GM12878 (cell line): ENCODE measurements at regions of chr13 and their contacts with region 1.

Region 1: DNA sequence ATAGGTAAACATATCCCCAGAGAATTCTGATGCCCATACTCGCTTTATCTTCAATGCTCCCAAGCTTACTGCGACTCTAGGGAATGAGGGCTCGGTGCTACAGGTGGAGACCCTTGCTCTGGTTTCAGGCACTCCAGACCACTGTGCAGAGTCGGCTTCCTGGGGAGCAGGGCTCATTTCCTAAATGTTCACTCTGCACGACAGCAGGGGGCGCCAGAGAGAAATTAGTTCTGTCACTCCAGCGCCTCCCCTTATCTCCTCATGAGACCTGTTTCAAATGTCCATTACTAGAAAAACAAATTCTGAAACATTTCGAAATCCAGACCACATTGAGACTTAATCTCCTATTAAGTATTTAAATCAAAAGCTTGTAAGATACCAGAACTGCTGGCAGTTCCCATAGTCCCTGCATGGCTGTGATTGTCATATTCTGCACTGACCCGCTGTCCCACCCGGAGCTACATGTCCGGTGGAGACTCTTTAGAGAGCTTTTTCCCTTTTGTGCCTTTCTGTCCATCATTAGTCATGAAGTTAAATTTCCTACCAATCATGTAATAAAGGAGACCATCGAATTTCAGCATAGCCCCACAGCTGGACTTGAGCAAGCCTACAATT is 22.4 kb downstream of the EPSTI1 start:
- DNase-seq: no peak
- ATAC-seq: peak; percentile 92
- H3K4me3 ChIP-seq: no peak overlapping the region
- H3K27ac ChIP-seq: no peak overlapping the region
- H3K4me1 ChIP-seq: peaks cover 10% of the 10 kb centered on the region
- H3K27me3 ChIP-seq: no peaks in the 10 kb centered on the region
- CTCF ChIP-seq: peak; percentile 79 to 84 (median 81)
- EP300 ChIP-seq: no peak
- POLR2A ChIP-seq: no peak
- RAD21 ChIP-seq: peak; percentile 67

Region 2: GRCh38 chr13:42247883-42248282 is 721.8 kb before region 1 on chr13:
- CTCF ChIA-PET with region 1: no interaction called
- POLR2A ChIA-PET with region 1: no interaction called
- RAD21 ChIA-PET with region 1: no interaction called
- SMC1A ChIA-PET with region 1: no interaction called
- in situ Hi-C with region 1: no loop called
- intact Hi-C with region 1: no loop called
- DNase-seq: no peak
- ATAC-seq: no peak
- H3K4me3 ChIP-seq: no peak overlapping the region
- H3K27ac ChIP-seq: no peak overlapping the region
- H3K4me1 ChIP-seq: no peaks in the 10 kb centered on the region
- H3K27me3 ChIP-seq: no peaks in the 10 kb centered on the region
- CTCF ChIP-seq: no peak
- EP300 ChIP-seq: no peak
- POLR2A ChIP-seq: no peak
- RAD21 ChIP-seq: no peak

Region 3: DNA sequence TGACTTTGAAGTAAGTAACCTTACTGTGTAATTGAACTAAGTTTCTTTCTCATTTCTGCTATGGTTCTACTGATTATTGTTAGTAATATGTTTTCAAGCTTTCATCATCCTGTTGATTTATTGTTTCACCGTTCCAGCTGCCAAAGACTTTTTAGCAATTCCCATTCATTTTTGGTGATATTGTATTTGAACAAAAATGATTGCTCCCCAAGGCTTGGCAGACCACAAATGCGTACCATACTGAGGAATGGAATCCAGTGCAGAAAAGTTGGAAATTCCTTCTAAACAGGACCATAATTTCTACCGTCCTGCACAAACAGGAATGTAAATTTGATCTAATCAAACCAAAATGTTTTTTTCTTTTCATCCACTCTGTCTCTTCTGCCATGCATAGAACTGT is 11.7 kb after region 1 on chr13:
- CTCF ChIA-PET with region 1: interaction called, 15 read pairs
- POLR2A ChIA-PET with region 1: interaction called, 3 read pairs
- RAD21 ChIA-PET with region 1: no interaction called
- SMC1A ChIA-PET with region 1: interaction called, 20 read pairs
- in situ Hi-C with region 1: no loop called
- intact Hi-C with region 1: no loop called
- DNase-seq: no peak
- ATAC-seq: no peak
- H3K4me3 ChIP-seq: no peak overlapping the region
- H3K27ac ChIP-seq: no peak overlapping the region
- H3K4me1 ChIP-seq: peaks cover 17% of the 10 kb centered on the region
- H3K27me3 ChIP-seq: no peaks in the 10 kb centered on the region
- CTCF ChIP-seq: no peak
- EP300 ChIP-seq: no peak
- POLR2A ChIP-seq: no peak
- RAD21 ChIP-seq: no peak

Region 4: GRCh38 chr13:42997381-42997780 is 27.7 kb after region 1 on chr13:
- CTCF ChIA-PET with region 1: interaction called, 59 read pairs
- POLR2A ChIA-PET with region 1: interaction called, 3 read pairs
- RAD21 ChIA-PET with region 1: interaction called, 8 read pairs
- SMC1A ChIA-PET with region 1: interaction called, 60 read pairs
- in situ Hi-C with region 1: no loop called
- intact Hi-C with region 1: no loop called
- DNase-seq: no peak
- ATAC-seq: peak; percentile 86
- H3K4me3 ChIP-seq: no peak overlapping the region
- H3K27ac ChIP-seq: peak overlapping the region; percentile 56
- H3K4me1 ChIP-seq: peaks cover 35% of the 10 kb centered on the region
- H3K27me3 ChIP-seq: no peaks in the 10 kb centered on the region
- CTCF ChIP-seq: no peak
- EP300 ChIP-seq: peak; percentile 28 to 54; a peak in 1 of 4 replicates
- POLR2A ChIP-seq: no peak
- RAD21 ChIP-seq: no peak

Region 5: GRCh38 chr13:43041369-43041921 is 71.8 kb after region 1 on chr13:
- CTCF ChIA-PET with region 1: interaction called, 3 read pairs
- POLR2A ChIA-PET with region 1: interaction called, 6 read pairs
- RAD21 ChIA-PET with region 1: interaction called, 3 read pairs
- SMC1A ChIA-PET with region 1: interaction called, 10 read pairs
- in situ Hi-C with region 1: no loop called
- intact Hi-C with region 1: no loop called
- DNase-seq: no peak
- ATAC-seq: peak; percentile 65
- H3K4me3 ChIP-seq: no peak overlapping the region
- H3K27ac ChIP-seq: peak overlapping the region; percentile 41
- H3K4me1 ChIP-seq: peaks cover 48% of the 10 kb centered on the region
- H3K27me3 ChIP-seq: no peaks in the 10 kb centered on the region
- CTCF ChIP-seq: no peak
- EP300 ChIP-seq: no peak
- POLR2A ChIP-seq: no peak
- RAD21 ChIP-seq: no peak

Region 6: GRCh38 chr13:43085545-43085944 is 115.9 kb after region 1 on chr13:
- CTCF ChIA-PET with region 1: interaction called, 29 read pairs
- POLR2A ChIA-PET with region 1: no interaction called
- RAD21 ChIA-PET with region 1: interaction called, 9 read pairs
- SMC1A ChIA-PET with region 1: interaction called, 22 read pairs
- in situ Hi-C with region 1: no loop called
- intact Hi-C with region 1: no loop called
- DNase-seq: no peak
- ATAC-seq: no peak
- H3K4me3 ChIP-seq: no peak overlapping the region
- H3K27ac ChIP-seq: no peak overlapping the region
- H3K4me1 ChIP-seq: peaks cover 2% of the 10 kb centered on the region; the same call in 1 of the 2 replicates
- H3K27me3 ChIP-seq: no peaks in the 10 kb centered on the region
- CTCF ChIP-seq: peak; percentile 3 to 44 (median 30); a peak in 2 of 6 replicates
- EP300 ChIP-seq: no peak
- POLR2A ChIP-seq: no peak
- RAD21 ChIP-seq: peak; percentile 36; the same call in 1 of the 2 replicates

Region 7: DNA sequence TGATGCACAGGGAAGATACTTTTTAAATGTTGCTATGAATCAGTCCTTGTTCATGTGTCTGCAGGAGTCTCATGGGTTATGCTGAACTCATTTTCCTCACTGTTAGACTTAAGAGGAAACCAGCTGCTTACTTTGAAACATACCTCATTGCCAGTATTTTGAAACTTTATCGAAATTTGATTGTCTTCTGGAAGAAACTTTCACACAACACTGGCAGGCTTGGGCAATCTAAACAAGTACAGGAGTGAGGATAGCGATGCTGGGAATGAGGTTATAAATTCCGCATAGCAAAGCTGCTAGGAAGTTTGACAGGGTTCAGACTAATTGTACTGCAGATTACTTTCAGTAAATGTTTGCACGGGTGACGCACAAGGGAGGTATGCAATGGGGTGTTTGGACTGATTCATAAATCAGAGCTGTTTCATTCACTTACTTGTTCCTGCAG is 299.4 kb after region 1 on chr13:
- CTCF ChIA-PET with region 1: no interaction called
- POLR2A ChIA-PET with region 1: no interaction called
- RAD21 ChIA-PET with region 1: interaction called, 3 read pairs
- SMC1A ChIA-PET with region 1: no interaction called
- in situ Hi-C with region 1: no loop called
- intact Hi-C with region 1: loop called (anchors 10 kb)
- DNase-seq: no peak
- ATAC-seq: no peak
- H3K4me3 ChIP-seq: no peak overlapping the region
- H3K27ac ChIP-seq: no peak overlapping the region
- H3K4me1 ChIP-seq: peaks cover 12% of the 10 kb centered on the region
- H3K27me3 ChIP-seq: no peaks in the 10 kb centered on the region
- CTCF ChIP-seq: no peak
- EP300 ChIP-seq: no peak
- POLR2A ChIP-seq: no peak
- RAD21 ChIP-seq: no peak

Region 8: GRCh38 chr13:43878892-43879754 is 909.5 kb after region 1 on chr13 and contains the start of gene CCDC122:
- CTCF ChIA-PET with region 1: no interaction called
- POLR2A ChIA-PET with region 1: no interaction called
- RAD21 ChIA-PET with region 1: no interaction called
- SMC1A ChIA-PET with region 1: no interaction called
- in situ Hi-C with region 1: loop called (anchors 10 kb)
- intact Hi-C with region 1: loop called (anchors 10 kb)
- DNase-seq: peak; percentile 13
- ATAC-seq: peak; percentile 93
- H3K4me3 ChIP-seq: peak within 1 kb of the TSS; percentile 73
- H3K27ac ChIP-seq: peak within 1 kb of the TSS; percentile 85
- H3K4me1 ChIP-seq: peaks cover 19% of the 10 kb centered on the region
- H3K27me3 ChIP-seq: no peaks in the 10 kb centered on the region
- CTCF ChIP-seq: no peak
- EP300 ChIP-seq: no peak
- POLR2A ChIP-seq: peak; percentile 91
- RAD21 ChIP-seq: no peak
- polyA plus RNA-seq, gene CCDC122: 1.0 to 1.5 TPM